ENCODE measurements at regions of chr10 and their contacts with region 1.

Region 1: DNA sequence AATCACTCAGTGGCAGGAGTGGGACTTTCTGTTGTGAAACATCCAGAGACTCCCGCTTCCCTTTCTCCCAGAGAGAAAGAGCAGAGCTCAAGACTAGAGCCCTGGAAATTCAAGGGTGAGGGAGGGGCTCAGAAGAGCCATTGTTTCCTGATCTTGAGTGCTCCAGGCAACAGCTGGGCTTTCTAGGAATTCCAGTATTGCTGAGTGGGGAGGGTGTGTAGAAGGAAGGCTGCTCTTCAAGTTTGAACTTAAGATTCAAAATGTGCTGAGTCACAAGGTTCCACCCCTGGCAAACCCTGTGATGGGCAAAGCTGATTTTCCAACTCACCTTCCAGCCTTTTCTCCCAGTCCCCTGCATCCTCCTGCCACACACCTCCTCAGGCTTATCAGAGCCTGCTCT is 42.3 kb upstream of the MSRB2 start:
- DNase-seq: peak in 1 of 4 experiments; percentile 68
- ATAC-seq: no peak; the same call in 2 of the 3 replicates
- H3K4me3 ChIP-seq: no peak overlapping the region
- H3K27ac ChIP-seq: peak overlapping the region; percentile 82
- H3K4me1 ChIP-seq: peaks cover 12 to 61% of the 10 kb centered on the region in 2 experiments
- H3K27me3 ChIP-seq: no peaks in the 10 kb centered on the region
- CTCF ChIP-seq: no peak
- EP300 ChIP-seq: peak; percentile 26; the same call in 1 of the 2 replicates
- POLR2A ChIP-seq: no peak
- RAD21 ChIP-seq: no peak

Region 2: GRCh38 chr10:23015021-23015707 is 37.9 kb before region 1 on chr10:
- CTCF ChIA-PET with region 1: no interaction called
- POLR2A ChIA-PET with region 1: interaction called, 4 read pairs
- in situ Hi-C with region 1: no loop called
- intact Hi-C with region 1: loop called (anchors 5 kb)
- DNase-seq: no peak
- ATAC-seq: no peak
- H3K4me3 ChIP-seq: no peak overlapping the region
- H3K27ac ChIP-seq: no peak overlapping the region; the same call in 2 of the 3 replicates
- H3K4me1 ChIP-seq: peaks cover 9 to 18% of the 10 kb centered on the region in 2 experiments
- H3K27me3 ChIP-seq: no peaks in the 10 kb centered on the region
- CTCF ChIP-seq: no peak
- EP300 ChIP-seq: no peak
- POLR2A ChIP-seq: no peak
- RAD21 ChIP-seq: no peak